ENCODE measurements at regions of chr5 and their contacts with region 1.

Region 1: GRCh38 chr5:143355720-143356119 is 47.8 kb downstream of the NR3C1 start:
- DNase-seq: peak; percentile 72 to 86
- H3K4me3 ChIP-seq: no peak overlapping the region
- H3K27ac ChIP-seq: peak overlapping the region; percentile 21; the same call in 1 of the 2 replicates
- H3K4me1 ChIP-seq: peaks cover 24% of the 10 kb centered on the region
- H3K27me3 ChIP-seq: no peaks in the 10 kb centered on the region
- CTCF ChIP-seq: no peak

Region 2: GRCh38 chr5:143340891-143341685 is 14.6 kb before region 1 on chr5:
- CTCF ChIA-PET with region 1: interaction called, 10 read pairs
- POLR2A ChIA-PET with region 1: no interaction called
- intact Hi-C with region 1: no loop called
- DNase-seq: no peak
- H3K4me3 ChIP-seq: no peak overlapping the region
- H3K27ac ChIP-seq: 0 out of 2 replicates have a peak overlapping the region, but pooled peaks have one; percentile 5
- H3K4me1 ChIP-seq: peaks cover 8% of the 10 kb centered on the region; the same call in 1 of the 2 replicates
- H3K27me3 ChIP-seq: no peaks in the 10 kb centered on the region
- CTCF ChIP-seq: no peak

Region 3: DNA sequence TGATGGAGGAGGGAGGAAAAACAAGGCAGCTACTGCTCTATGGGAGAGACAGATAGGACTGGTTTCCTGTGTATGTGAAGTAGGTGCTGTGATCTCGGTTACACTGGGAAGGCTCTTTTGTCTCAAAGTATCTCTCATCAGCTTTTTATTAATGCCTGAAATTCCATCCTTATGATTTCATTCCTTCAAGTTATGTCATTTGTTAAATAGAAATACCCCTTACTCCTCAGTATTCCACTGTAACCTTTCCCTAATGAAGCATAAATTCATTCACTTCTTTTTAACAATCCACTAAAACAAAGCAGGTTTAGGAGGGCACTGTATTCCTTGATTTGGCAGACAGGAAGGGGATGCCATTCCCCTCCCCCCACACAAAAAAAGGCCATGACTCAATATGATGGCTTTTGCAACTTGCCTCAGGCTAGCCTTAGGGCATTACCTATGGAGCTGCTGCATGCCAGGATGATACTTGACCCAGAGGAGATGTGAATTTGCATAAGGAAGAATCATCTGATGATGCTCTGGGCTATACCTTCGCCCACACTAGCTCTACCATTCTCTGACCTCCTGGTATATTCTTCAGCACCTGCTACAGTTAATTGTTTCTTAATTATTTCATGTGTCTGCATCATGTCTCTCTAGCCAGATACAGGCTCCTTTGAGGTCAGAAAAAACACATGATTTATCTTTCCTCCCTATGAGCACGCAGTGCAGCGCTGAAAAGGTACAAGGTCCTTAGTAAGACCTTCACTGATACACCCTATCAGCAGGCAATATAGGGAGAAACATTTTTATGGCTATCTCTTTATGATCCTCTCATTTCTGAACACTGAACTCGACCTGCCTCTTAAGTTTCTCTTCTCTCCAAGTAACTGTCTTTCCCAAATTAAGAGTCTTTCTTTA is 21.4 kb after region 1 on chr5:
- CTCF ChIA-PET with region 1: no interaction called
- POLR2A ChIA-PET with region 1: no interaction called
- intact Hi-C with region 1: loop called (anchors 2 kb)
- DNase-seq: peak; percentile 75 to 80
- H3K4me3 ChIP-seq: no peak overlapping the region
- H3K27ac ChIP-seq: peak overlapping the region; percentile 62
- H3K4me1 ChIP-seq: peaks cover 20% of the 10 kb centered on the region
- H3K27me3 ChIP-seq: no peaks in the 10 kb centered on the region
- CTCF ChIP-seq: no peak